ENCODE measurements at regions of chr7 and their contacts with region 1.

Region 1: DNA sequence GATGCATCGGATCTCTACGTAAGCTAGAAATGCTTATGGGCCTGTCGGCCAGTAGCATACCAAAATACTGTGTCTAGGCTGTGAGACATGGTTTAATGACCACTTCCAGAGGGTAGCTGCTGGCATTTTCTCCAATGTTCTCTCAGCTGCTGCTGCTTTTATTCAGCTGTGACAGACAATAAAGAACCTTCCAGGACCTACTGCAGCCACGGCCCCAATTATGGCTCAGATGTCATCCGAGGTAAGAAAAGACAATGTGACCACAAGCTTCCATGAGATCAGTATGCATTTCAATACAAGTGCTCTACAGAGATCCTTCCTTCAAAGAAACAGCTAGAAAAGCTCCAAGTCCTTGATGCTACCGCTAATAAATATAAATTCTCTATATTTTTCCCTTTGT is 256.2 kb downstream of the SDHAF3 start:
- DNase-seq: no peak
- H3K4me3 ChIP-seq: no peak overlapping the region
- H3K27ac ChIP-seq: no peak overlapping the region
- H3K4me1 ChIP-seq: no peaks in the 10 kb centered on the region
- H3K27me3 ChIP-seq: no peaks in the 10 kb centered on the region
- CTCF ChIP-seq: no peak
- POLR2A ChIP-seq: no peak

Region 2: GRCh38 chr7:97317575-97317974 is 56.2 kb before region 1 on chr7:
- intact Hi-C with region 1: loop called (anchors 10 kb)
- DNase-seq: no peak
- H3K4me3 ChIP-seq: no peak overlapping the region
- H3K27ac ChIP-seq: no peak overlapping the region
- H3K4me1 ChIP-seq: no peaks in the 10 kb centered on the region
- H3K27me3 ChIP-seq: no peaks in the 10 kb centered on the region
- CTCF ChIP-seq: no peak
- POLR2A ChIP-seq: no peak

Measured in esophagus squamous epithelium (tissue), 5 donors.